Cardiac septum (tissue), 1 donor: ENCODE measurements at regions of chr4 and their contacts with region 1.

Region 1: GRCh38 chr4:155953151-155954114 is at the start of gene CTSO:
- DNase-seq: peak; percentile 82
- total RNA-seq, gene CTSO: 9.0 TPM

Region 2: DNA sequence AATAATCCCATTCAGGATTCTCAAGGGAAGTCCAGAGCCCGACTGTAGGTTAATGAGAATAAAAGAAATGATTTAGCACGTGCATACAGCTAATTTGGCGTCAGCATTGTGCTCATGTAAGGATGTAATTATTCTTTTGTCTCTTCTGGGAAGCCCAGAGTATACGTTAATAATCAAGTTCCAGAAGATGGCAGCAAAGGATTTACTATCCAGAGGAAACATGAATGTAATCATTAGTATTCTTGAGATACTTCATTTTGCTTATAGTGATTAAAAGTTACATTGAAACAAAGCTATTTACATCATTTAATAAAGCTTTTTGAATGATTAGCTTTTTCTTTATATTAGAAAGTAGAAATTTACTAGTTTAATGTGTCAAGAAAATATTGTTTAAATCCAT is 549.5 kb before region 1 on chr4:
- intact Hi-C with region 1: loop called (anchors 10 kb)
- DNase-seq: no peak

Region 3: DNA sequence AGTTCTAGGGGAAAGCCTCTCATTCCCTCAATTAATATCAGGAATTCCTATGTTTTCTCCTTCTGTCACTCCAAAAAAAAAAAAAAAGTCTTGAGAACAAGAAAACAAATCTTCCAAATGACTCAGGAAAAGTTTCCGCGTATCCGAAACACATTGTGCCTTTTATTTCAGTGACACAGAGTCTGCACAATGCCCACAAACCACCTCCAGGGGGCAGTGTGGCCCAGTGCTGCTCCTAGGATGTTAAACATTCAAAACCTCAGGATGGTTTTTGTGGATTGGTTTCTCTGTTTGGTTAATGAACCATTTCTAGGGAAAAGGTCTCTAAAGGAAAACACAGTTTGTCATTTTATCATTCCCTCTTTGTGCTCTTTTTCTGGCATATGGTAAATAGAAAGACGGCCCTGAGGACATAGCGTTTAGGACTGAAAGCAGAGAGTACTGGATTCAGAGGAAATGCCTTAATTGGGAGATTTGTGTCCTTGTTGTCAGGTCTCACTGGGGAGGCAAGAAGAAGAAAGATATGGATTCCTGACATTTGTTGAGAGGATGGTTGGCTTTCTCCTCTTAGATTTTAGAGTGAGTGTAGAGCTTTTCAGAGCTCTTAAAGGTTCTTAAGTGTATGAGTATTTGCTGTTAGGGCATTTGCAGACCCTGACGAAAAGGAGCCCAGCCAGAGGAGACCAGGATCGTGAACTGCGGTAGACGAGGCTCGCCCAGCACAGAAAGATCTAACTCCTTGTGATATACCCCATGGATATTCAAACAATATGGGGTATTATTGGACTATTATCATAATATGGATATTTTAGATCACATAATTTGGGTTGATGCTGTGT is 510.9 kb before region 1 on chr4:
- intact Hi-C with region 1: loop called (anchors 10 kb)
- DNase-seq: peak; percentile 88

Region 4: GRCh38 chr4:155809835-155810234 is 143.6 kb before region 1 on chr4:
- intact Hi-C with region 1: loop called (anchors 2 kb)
- DNase-seq: no peak

Region 5: DNA sequence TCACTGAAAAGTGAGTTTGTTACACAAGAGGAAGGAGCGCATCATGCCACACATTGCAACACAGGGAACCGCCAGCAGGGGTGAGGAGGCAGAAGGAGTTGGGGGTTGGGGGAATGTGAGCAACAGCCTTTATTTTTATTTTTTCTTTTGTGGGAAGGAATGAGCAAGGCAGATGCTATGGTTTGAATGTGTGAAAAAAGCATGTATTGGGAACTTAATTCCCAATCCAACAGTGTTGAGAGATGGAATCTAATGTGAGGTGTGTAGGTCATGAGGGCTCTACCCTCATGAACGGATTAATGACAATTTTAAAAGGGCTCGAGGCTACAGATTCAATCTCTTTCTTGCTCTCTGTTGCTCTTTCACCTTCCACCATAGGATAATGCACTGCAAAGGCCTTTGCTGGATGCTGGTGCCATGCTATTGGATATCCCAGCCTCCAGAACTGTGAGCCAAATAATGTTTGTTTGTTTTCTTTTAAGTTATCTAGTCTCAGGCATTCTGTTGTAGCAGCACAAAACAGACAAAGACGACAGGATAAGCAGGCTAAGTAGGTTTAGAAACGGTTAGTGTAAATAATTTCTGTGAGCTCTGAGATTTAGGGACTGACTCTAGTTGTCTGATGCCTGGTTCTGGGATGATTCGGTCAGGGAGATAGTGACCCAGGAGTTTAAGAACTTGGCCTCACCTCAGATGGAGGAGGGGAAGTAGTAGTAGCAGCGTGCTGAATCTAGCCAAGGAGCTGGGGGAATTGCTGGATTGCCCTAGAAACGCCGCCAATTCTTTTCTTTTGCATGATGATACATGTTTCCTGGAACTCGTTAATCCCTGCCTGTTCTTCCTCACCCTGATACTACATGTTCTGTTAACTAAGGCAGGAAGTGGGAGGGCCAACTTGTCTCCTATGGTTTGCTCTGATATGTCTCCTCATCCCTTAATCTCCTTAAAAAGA is 156.8 kb after region 1 on chr4:
- intact Hi-C with region 1: no loop called
- DNase-seq: no peak